ENCODE measurements at regions of chr2 and their contacts with region 1.

Region 1: GRCh38 chr2:42622943-42623676 is 54.7 kb downstream of the MTA3 start:
- DNase-seq: no peak
- ATAC-seq: no peak
- H3K4me3 ChIP-seq: no peak overlapping the region
- H3K27ac ChIP-seq: no peak overlapping the region
- H3K4me1 ChIP-seq: peaks cover 4% of the 10 kb centered on the region; the same call in 1 of the 2 replicates
- H3K27me3 ChIP-seq: no peaks in the 10 kb centered on the region
- CTCF ChIP-seq: no peak

Region 2: DNA sequence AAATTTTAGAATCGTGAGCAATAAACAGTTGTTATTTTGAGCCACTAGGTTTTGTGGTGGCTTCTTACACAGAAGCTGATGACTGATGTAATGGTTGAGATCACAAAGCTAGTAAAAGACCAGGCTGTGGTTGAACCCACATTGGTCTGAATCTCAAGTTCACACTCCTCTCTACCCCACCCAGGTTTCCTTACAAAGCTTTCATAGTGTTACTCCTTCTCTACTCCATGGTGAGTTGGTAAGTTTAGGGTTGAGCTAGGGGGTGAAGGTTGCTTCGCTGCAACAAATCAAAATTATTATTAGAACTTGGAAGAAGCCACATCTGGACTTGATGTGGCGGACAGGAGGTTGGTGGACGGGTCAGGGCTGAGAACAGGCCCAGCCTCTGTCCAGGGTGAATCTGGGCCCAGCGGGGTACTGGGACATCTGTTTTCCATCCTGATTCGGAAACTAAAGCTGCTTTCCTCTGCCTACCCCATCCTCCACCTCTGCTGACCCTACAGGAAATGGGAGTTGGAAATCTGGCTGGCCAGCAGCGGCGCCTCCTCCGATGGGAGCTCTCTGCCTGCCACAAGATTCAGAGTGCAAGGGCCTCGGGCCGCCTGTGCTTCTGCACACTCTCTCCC is 517.0 kb after region 1 on chr2:
- CTCF ChIA-PET with region 1: interaction called, 15 read pairs
- POLR2A ChIA-PET with region 1: no interaction called
- intact Hi-C with region 1: no loop called
- DNase-seq: no peak
- ATAC-seq: no peak
- H3K4me3 ChIP-seq: no peak overlapping the region
- H3K27ac ChIP-seq: no peak overlapping the region
- H3K4me1 ChIP-seq: no peaks in the 10 kb centered on the region
- H3K27me3 ChIP-seq: no peaks in the 10 kb centered on the region
- CTCF ChIP-seq: no peak